HepG2 (cell line): ENCODE measurements at regions of chr3 and their contacts with region 1.

Region 1: GRCh38 chr3:194620196-194620595 is 13.0 kb downstream of the TMEM44 start:
- DNase-seq: no peak
- ATAC-seq: no peak
- H3K4me3 ChIP-seq: no peak overlapping the region
- H3K27ac ChIP-seq: peak overlapping the region; percentile 68
- H3K4me1 ChIP-seq: peaks cover 21% of the 10 kb centered on the region
- H3K27me3 ChIP-seq: no peaks in the 10 kb centered on the region
- CTCF ChIP-seq: no peak
- EP300 ChIP-seq: no peak
- POLR2A ChIP-seq: no peak
- RAD21 ChIP-seq: no peak

Region 2: GRCh38 chr3:194536871-194537637 is 83.1 kb before region 1 on chr3:
- CTCF ChIA-PET with region 1: no interaction called
- POLR2A ChIA-PET with region 1: no interaction called
- in situ Hi-C with region 1: no loop called
- intact Hi-C with region 1: no loop called
- DNase-seq: peak; percentile 70
- ATAC-seq: peak; percentile 90
- H3K4me3 ChIP-seq: peak overlapping the region in 2 of 3 experiments; percentile 42 to 57; a peak in 5 of 6 replicates
- H3K27ac ChIP-seq: peak overlapping the region; percentile 91
- H3K4me1 ChIP-seq: peaks cover 49% of the 10 kb centered on the region
- H3K27me3 ChIP-seq: no peaks in the 10 kb centered on the region
- CTCF ChIP-seq: no peak
- EP300 ChIP-seq: peak in 1 of 2 experiments; percentile 67; a peak in 2 of 4 replicates
- POLR2A ChIP-seq: 0 out of 4 replicates have a peak, but pooled peaks of 1 of the 2 experiments have one; percentile 25
- RAD21 ChIP-seq: no peak

Region 3: DNA sequence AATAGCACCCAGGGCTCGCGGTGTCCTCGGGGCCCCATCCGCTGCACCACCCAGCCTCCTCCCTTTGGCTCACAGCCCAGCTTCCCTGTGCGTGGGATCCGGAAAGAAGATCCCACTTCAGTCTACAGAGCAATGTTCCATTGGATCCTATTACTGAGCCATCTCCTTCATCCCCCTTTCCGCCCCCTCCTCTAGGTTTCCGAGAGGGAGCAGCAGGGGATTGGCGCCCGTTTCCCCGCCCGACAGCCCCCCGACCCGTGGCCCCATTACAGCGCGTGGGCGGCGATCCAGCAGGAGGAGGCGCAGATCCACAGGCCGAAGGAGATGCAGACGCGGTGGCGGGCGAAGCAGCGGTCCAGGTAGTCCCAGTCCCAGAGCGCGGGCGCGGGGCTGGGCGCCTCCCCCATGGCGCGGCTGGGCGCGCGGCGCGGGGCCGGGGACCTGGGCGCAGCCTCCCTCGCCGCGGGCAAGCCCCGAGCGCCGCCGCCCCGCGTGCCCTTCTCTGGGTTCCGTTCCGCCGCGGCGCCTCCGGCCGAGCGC is 12.7 kb after region 1 on chr3:
- CTCF ChIA-PET with region 1: no interaction called
- POLR2A ChIA-PET with region 1: interaction called, 10 read pairs
- in situ Hi-C with region 1: no loop called
- intact Hi-C with region 1: loop called (anchors 1 kb)
- DNase-seq: no peak
- ATAC-seq: peak; percentile 71
- H3K4me3 ChIP-seq: peak overlapping the region; percentile 73 to 87 (median 85)
- H3K27ac ChIP-seq: peak overlapping the region; percentile 59
- H3K4me1 ChIP-seq: peaks cover 7% of the 10 kb centered on the region
- H3K27me3 ChIP-seq: no peaks in the 10 kb centered on the region
- CTCF ChIP-seq: no peak
- EP300 ChIP-seq: no peak
- POLR2A ChIP-seq: no peak
- RAD21 ChIP-seq: no peak